ENCODE measurements at regions of chr2 and their contacts with region 1.

Region 1: DNA sequence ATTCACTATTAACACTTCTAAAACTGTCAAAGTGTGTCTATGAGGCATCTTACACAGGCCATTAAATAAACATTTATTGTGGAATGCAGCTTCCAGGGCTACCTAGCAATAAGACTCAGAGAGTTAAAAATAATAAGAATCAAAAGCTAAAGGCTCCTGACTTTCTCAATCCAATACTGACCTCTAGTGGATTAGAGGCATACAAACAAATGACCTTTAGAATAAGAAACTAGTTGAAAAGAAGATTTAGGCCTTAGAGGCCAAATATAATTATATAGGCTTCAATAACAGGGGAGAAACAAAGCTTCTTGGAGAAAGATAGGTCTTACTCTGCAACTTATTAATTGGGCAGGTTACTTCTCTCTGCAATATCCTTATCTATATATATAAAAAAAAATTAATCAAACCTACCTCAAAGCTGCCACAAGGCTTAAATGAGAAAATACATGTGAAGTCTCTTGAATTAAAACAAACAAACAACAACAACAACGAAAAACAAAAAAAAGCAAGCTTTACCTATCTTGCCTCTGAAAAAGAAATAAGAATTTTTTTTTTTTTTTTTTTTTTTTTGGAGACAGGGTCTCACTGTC is 246.1 kb downstream of the EXOC6B start:
- DNase-seq: peak; percentile 62
- H3K4me3 Mint-ChIP-seq: no peak overlapping the region
- H3K27ac Mint-ChIP-seq: no peak overlapping the region
- H3K4me1 Mint-ChIP-seq: no peaks in the 10 kb centered on the region
- H3K27me3 Mint-ChIP-seq: no peaks in the 10 kb centered on the region
- CTCF ChIP-seq: peak; percentile 65

Region 2: GRCh38 chr2:71545572-71546274 is 1034.0 kb before region 1 on chr2:
- CTCF ChIA-PET with region 1: interaction called, 5 read pairs
- POLR2A ChIA-PET with region 1: no interaction called
- intact Hi-C with region 1: loop called (anchors 2 kb)
- DNase-seq: peak; percentile 63
- H3K4me3 Mint-ChIP-seq: no peak overlapping the region
- H3K27ac Mint-ChIP-seq: no peak overlapping the region
- H3K4me1 Mint-ChIP-seq: peaks cover 5% of the 10 kb centered on the region
- H3K27me3 Mint-ChIP-seq: peaks cover 29% of the 10 kb centered on the region
- CTCF ChIP-seq: peak; percentile 83

Region 3: DNA sequence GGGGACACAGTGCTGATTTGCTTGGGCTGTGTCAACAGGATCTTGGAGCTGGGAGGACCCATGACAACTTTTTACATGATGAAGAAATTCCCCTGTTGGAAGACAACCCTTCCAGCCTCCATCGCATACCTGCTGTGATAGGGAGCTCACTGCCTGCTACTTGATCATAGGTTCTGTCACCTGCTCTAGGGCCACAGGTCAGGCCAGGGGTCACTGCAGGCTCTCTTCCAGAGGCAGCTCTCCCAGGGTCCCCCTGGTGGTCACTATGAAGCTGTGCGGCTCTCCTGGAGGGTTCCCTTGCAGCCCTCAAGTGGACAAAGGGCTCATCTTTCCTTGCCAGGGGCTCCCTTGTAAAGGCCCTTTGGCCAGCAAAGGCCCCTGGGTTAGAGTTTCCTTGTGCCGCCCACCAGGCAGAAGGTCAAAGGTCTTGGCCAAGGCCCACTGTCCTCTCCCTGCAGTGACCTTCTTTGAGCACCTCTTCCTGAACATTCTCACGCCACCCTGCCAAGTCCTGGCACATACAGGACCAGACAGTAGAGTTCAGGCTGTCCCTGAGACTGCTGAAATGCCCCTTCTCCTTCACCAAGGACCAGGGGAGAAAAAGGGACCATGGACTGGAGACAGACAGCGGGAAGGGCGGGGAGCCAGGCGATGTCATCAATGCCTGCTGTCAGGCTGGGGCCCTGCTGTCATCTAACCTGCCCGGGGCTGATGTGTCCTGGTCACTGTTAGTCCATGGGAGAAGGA is 781.2 kb before region 1 on chr2:
- CTCF ChIA-PET with region 1: interaction called, 3 read pairs
- POLR2A ChIA-PET with region 1: no interaction called
- intact Hi-C with region 1: loop called (anchors 5 kb)
- DNase-seq: peak; percentile 61
- H3K4me3 Mint-ChIP-seq: no peak overlapping the region
- H3K27ac Mint-ChIP-seq: no peak overlapping the region
- H3K4me1 Mint-ChIP-seq: no peaks in the 10 kb centered on the region
- H3K27me3 Mint-ChIP-seq: no peaks in the 10 kb centered on the region
- CTCF ChIP-seq: peak; percentile 72

Region 4: DNA sequence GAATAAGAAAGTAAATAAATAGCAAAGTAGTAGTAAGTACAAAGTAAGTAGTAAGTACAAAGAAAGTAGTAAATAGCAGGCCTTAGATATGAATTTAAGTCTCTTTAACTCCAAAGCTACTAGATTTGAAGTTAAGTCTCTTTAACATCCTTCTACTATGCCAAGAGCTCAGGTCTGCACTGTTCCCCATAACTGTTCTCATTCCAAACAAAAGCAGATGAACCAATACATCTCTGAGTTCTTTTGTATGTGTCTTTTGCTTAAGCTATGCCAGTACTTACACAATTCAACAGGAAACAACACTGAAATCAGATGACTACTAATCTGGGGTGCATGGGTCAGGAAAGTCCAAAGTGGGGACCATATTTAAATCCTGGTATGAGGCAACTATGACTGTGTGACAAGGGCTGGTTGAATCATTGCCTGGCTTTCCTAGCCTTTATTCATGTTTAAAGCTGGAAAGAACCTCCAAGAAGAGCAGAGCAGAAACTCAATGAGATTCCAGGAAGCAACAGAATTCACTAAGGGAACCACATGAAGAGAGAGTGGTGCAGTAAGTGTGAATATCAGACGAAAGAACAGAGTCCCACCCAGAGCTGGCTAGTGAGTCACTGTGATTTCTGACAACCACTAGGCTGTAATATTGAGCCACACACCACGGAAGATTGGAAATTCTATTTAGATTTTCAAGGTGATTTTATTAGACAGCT is 381.0 kb before region 1 on chr2:
- CTCF ChIA-PET with region 1: interaction called, 3 read pairs
- POLR2A ChIA-PET with region 1: no interaction called
- intact Hi-C with region 1: loop called (anchors 1 kb)
- DNase-seq: peak; percentile 45
- H3K4me3 Mint-ChIP-seq: no peak overlapping the region
- H3K27ac Mint-ChIP-seq: no peak overlapping the region
- H3K4me1 Mint-ChIP-seq: peaks cover 6% of the 10 kb centered on the region
- H3K27me3 Mint-ChIP-seq: no peaks in the 10 kb centered on the region
- CTCF ChIP-seq: no peak

Region 5: GRCh38 chr2:72367530-72368225 is 212.0 kb before region 1 on chr2:
- CTCF ChIA-PET with region 1: no interaction called
- POLR2A ChIA-PET with region 1: no interaction called
- intact Hi-C with region 1: loop called (anchors 5 kb)
- DNase-seq: peak; percentile 100
- H3K4me3 Mint-ChIP-seq: peak overlapping the region; percentile 25
- H3K27ac Mint-ChIP-seq: no peak overlapping the region
- H3K4me1 Mint-ChIP-seq: peaks cover 21% of the 10 kb centered on the region
- H3K27me3 Mint-ChIP-seq: no peaks in the 10 kb centered on the region
- CTCF ChIP-seq: peak; percentile 58

Region 6: DNA sequence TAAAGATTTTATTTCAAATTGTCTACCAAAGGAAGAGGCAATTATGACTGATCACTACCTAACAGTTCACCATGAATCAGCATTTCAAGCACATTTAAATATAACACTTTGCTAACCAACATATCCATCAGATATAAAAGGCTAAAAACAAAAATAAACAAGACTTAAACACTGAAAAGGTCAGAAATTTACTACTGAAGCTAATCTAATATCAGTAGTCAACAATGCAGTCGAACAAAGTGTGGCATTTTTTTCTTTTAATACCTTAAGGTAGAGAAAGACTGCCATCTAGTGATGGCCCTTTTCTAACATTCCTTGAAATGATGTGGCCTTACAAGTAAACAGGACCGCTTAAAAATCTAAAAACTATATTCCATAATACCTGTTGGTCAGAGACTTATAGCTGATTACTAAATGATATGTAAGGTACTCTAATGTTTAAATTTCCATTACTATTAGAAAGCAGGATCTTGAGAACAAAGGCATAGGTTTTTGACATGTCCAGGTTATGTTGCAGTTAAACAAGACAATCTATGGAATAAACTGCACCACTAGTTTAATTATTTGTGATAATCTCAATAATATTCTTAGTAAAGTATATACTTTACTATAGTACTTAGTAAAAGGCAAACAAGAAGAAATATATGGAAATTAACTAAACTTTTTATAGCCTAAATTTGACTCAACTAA is 166.1 kb after region 1 on chr2:
- CTCF ChIA-PET with region 1: interaction called, 8 read pairs
- POLR2A ChIA-PET with region 1: interaction called, 5 read pairs
- intact Hi-C with region 1: loop called (anchors 2 kb)
- DNase-seq: peak; percentile 72
- H3K4me3 Mint-ChIP-seq: no peak overlapping the region
- H3K27ac Mint-ChIP-seq: no peak overlapping the region
- H3K4me1 Mint-ChIP-seq: no peaks in the 10 kb centered on the region
- H3K27me3 Mint-ChIP-seq: no peaks in the 10 kb centered on the region
- CTCF ChIP-seq: peak; percentile 68

Measured in MCF 10A (cell line).